ENCODE measurements at regions of chr5 and their contacts with region 1.

Region 1: GRCh38 chr5:16456103-16456832 is 9.3 kb downstream of the ZNF622 start:
- DNase-seq: no peak
- H3K4me3 ChIP-seq: no peak overlapping the region
- H3K27ac ChIP-seq: peak overlapping the region in 1 of 8 donors; percentile 21
- H3K4me1 ChIP-seq: peaks cover 11 to 69% (median 45%) of the 10 kb centered on the region in 6 donors
- H3K27me3 ChIP-seq: no peaks in the 10 kb centered on the region
- CTCF ChIP-seq: peak; percentile 32 to 77 (median 66)
- POLR2A ChIP-seq: no peak

Region 2: DNA sequence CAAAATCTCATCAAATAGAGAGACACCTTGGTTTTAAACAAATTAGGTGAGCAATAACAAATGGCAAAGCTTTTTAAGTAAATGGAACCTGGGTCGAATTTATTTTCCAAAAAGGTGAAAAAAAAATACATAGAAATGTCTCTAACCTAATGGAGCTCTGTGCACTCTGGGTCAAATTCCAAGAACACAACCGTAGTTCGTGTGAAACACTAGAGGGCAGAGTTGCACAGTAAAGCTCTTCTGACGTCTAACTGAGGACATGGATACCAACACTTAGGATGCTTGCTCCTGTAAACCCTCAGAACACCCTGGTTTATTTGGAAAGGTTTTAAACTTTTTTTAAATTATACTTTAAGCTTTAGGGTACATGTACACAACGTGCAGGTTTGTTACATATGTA is 295.6 kb before region 1 on chr5:
- intact Hi-C with region 1: loop called (anchors 10 kb)
- DNase-seq: no peak
- H3K4me3 ChIP-seq: no peak overlapping the region
- H3K27ac ChIP-seq: no peak overlapping the region
- H3K4me1 ChIP-seq: no peaks in the 10 kb centered on the region
- H3K27me3 ChIP-seq: no peaks in the 10 kb centered on the region
- CTCF ChIP-seq: peak in 7 of 11 experiments; percentile 11 to 53 (median 36)
- POLR2A ChIP-seq: no peak

Region 3: GRCh38 chr5:16178745-16179372 is 277.4 kb before region 1 on chr5:
- intact Hi-C with region 1: no loop called
- DNase-seq: peak; percentile 71
- H3K4me3 ChIP-seq: peak overlapping the region in 1 of 8 donors; percentile 40
- H3K27ac ChIP-seq: no peak overlapping the region
- H3K4me1 ChIP-seq: peaks cover 0 to 6% (median 0%) of the 10 kb centered on the region in 6 donors
- H3K27me3 ChIP-seq: peaks cover 0 to 73% (median 31%) of the 10 kb centered on the region in 7 donors
- CTCF ChIP-seq: no peak
- POLR2A ChIP-seq: no peak

Region 4: DNA sequence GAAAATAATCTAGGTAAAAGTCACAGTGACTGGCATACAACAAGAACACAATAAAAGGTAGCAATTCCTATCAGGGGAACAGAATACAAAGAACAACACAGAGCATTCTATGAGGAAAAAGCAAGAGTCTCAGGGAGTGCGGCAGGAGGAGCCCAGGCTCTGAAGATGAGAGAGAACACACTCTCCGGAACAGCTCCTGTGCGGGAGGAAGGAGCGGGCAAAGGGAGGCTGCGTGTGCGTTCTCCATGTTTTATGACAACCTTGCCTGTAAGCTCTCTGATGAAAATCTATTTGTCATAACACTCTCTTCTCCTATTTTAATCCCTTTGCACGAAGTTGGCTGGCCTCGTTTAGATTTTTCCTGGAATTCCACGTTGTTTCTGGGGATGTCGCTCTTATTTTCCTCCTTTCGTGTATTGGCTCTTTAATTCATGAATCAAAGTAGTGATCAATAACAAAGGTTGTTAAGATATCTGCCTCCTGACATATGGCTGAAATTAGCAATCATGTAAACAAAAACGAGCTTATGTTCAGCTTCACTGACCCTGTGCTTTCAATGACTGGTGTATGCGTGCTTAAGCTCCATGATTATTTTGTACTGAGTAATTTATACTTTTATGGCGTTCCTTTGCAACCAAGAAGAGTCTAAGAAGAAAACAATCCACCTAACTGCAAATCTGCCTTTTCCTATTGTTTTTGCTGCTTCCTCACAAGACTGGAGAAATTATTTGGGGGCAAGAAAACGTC is 370.3 kb after region 1 on chr5:
- intact Hi-C with region 1: no loop called
- DNase-seq: no peak
- H3K4me3 ChIP-seq: no peak overlapping the region
- H3K27ac ChIP-seq: no peak overlapping the region
- H3K4me1 ChIP-seq: no peaks in the 10 kb centered on the region
- H3K27me3 ChIP-seq: no peaks in the 10 kb centered on the region
- CTCF ChIP-seq: no peak
- POLR2A ChIP-seq: no peak

Measured in spleen (tissue), 13 donors.